IMR-90 (cell line): ENCODE measurements at regions of chr20 and their contacts with region 1.

Region 1: GRCh38 chr20:35629427-35630145 is 14.0 kb downstream of the SPAG4 start:
- DNase-seq: no peak
- ATAC-seq: no peak
- H3K4me3 ChIP-seq: no peak overlapping the region
- H3K27ac ChIP-seq: no peak overlapping the region
- H3K4me1 ChIP-seq: no peaks in the 10 kb centered on the region; the same call in 1 of the 2 replicates
- H3K27me3 ChIP-seq: no peaks in the 10 kb centered on the region
- CTCF ChIP-seq: no peak
- POLR2A ChIP-seq: no peak
- RAD21 ChIP-seq: no peak

Region 2: GRCh38 chr20:35619196-35620095 is 10.1 kb before region 1 on chr20:
- CTCF ChIA-PET with region 1: interaction called, 5 read pairs
- POLR2A ChIA-PET with region 1: interaction called, 12 read pairs
- dilution Hi-C with region 1: no loop called
- in situ Hi-C with region 1: no loop called
- intact Hi-C with region 1: no loop called
- DNase-seq: peak; percentile 78
- ATAC-seq: peak; percentile 58
- H3K4me3 ChIP-seq: peak overlapping the region; percentile 73
- H3K27ac ChIP-seq: no peak overlapping the region; the same call in 1 of the 2 replicates
- H3K4me1 ChIP-seq: peaks cover 13% of the 10 kb centered on the region
- H3K27me3 ChIP-seq: no peaks in the 10 kb centered on the region
- CTCF ChIP-seq: peak; percentile 42
- POLR2A ChIP-seq: peak; percentile 38; the same call in 1 of the 2 replicates
- RAD21 ChIP-seq: peak; percentile 23; the same call in 1 of the 2 replicates